Natural killer cell (primary cell): ENCODE measurements at regions of chr1 and their contacts with region 1.

Region 1: GRCh38 chr1:101309334-101310311 is 72.8 kb downstream of the S1PR1 start:
- DNase-seq: peak; percentile 72 to 94
- ATAC-seq: peak; percentile 66 to 89 (median 85)
- H3K4me3 ChIP-seq: peak overlapping the region; percentile 28
- H3K4me3 Mint-ChIP-seq: peak overlapping the region; percentile 84
- H3K27ac ChIP-seq: peak overlapping the region; percentile 86
- H3K27ac Mint-ChIP-seq: peak overlapping the region; percentile 91
- H3K4me1 ChIP-seq: peaks cover 76% of the 10 kb centered on the region
- H3K4me1 Mint-ChIP-seq: peaks cover 86 to 88% of the 10 kb centered on the region in 2 donors
- H3K27me3 ChIP-seq: no peaks in the 10 kb centered on the region
- H3K27me3 Mint-ChIP-seq: no peaks in the 10 kb centered on the region
- CTCF ChIP-seq: peak; percentile 83

Region 2: GRCh38 chr1:100396651-100397050 is 913.0 kb before region 1 on chr1:
- intact Hi-C with region 1: loop called (anchors 10 kb)
- DNase-seq: peak in 1 of 2 donors; percentile 75
- ATAC-seq: peak; percentile 67 to 79 (median 77)
- H3K4me3 ChIP-seq: no peak overlapping the region
- H3K4me3 Mint-ChIP-seq: peak overlapping the region; percentile 72
- H3K27ac ChIP-seq: peak overlapping the region; percentile 89
- H3K27ac Mint-ChIP-seq: peak overlapping the region; percentile 80 to 95
- H3K4me1 ChIP-seq: peaks cover 49% of the 10 kb centered on the region
- H3K4me1 Mint-ChIP-seq: peaks cover 77% of the 10 kb centered on the region in 2 donors
- H3K27me3 ChIP-seq: no peaks in the 10 kb centered on the region
- H3K27me3 Mint-ChIP-seq: no peaks in the 10 kb centered on the region
- CTCF ChIP-seq: no peak

Region 3: DNA sequence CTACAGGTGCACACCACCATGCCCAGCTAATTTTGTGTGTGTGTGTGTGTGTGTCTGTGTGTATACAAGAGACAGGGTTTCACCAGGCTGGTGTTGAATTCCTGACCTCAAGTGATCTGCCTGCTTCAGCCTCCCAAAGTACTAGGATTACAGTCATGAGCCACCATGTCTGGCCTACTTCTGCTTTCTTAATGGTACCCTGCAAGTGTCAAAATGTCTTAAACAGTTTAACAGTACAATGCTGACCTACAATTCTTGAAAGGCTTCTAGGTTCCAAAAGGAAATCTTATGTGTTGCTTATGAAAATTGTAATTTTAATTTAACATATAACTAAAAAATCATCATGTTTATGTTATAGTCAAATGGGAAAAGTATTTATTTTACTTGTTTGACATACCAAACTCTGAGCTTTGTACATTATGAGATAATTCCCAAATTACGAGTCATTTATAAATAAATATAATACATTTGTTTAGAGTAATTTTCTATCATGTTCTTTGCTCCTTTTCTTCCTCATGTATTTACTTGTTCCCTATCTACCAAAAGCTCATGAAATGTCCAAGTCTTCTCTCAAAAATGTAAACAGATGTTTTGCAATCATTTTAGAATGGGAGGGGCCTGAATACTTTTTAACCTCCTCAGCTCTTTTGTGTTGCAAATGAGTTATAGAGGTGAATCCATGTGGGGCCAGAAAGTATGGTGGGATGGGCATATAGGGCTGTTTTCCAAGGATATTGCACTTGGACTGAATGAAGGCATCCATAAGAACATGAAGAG is 598.5 kb before region 1 on chr1:
- intact Hi-C with region 1: loop called (anchors 2 kb)
- DNase-seq: no peak
- ATAC-seq: no peak
- H3K4me3 ChIP-seq: no peak overlapping the region
- H3K4me3 Mint-ChIP-seq: no peak overlapping the region
- H3K27ac ChIP-seq: no peak overlapping the region
- H3K27ac Mint-ChIP-seq: peak overlapping the region in 1 of 2 donors; percentile 96
- H3K4me1 ChIP-seq: peaks cover 22% of the 10 kb centered on the region
- H3K4me1 Mint-ChIP-seq: peaks cover 46 to 49% of the 10 kb centered on the region in 2 donors
- H3K27me3 ChIP-seq: peaks cover 2% of the 10 kb centered on the region
- H3K27me3 Mint-ChIP-seq: peaks cover 3 to 35% of the 10 kb centered on the region in 2 donors
- CTCF ChIP-seq: no peak

Region 4: DNA sequence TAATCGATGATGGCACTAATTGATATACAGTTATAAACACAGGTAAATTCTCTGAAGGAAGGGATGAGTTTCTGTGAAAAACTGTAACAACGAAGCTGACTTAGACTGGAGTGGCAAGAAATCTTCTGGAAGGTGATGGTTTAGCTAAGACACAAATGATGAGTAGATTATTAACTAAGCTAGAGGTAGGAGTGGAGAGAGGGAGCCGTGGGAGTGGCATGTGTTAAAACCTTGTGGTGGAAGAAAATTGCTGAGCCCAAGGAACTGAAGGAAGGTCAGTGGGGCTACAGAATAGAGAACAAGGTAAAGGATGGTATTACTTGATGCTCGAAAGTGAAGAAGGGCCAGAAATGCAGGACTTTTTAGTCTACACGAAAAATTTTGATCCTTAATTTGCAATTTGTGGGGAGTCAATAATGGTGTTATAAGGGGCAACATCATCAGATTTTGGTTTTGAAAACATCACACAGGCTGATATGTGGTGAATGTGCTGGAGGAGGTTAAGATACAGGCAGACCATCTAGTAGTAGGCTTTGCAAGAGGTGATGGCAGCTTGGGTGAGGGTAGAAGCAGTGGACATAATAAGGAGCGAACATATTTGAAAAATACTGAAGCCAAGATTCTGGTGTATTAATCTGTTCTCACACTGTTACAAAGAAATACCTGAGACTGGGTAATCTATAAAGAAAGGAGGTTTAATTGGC is 21.0 kb after region 1 on chr1:
- intact Hi-C with region 1: loop called (anchors 1 kb)
- DNase-seq: no peak
- ATAC-seq: peak; percentile 43 to 72 (median 54)
- H3K4me3 ChIP-seq: no peak overlapping the region
- H3K4me3 Mint-ChIP-seq: peak overlapping the region; percentile 83
- H3K27ac ChIP-seq: peak overlapping the region; percentile 59
- H3K27ac Mint-ChIP-seq: peak overlapping the region; percentile 88 to 92
- H3K4me1 ChIP-seq: peaks cover 23% of the 10 kb centered on the region
- H3K4me1 Mint-ChIP-seq: peaks cover 76% of the 10 kb centered on the region in 2 donors
- H3K27me3 ChIP-seq: no peaks in the 10 kb centered on the region
- H3K27me3 Mint-ChIP-seq: no peaks in the 10 kb centered on the region
- CTCF ChIP-seq: no peak

Region 5: DNA sequence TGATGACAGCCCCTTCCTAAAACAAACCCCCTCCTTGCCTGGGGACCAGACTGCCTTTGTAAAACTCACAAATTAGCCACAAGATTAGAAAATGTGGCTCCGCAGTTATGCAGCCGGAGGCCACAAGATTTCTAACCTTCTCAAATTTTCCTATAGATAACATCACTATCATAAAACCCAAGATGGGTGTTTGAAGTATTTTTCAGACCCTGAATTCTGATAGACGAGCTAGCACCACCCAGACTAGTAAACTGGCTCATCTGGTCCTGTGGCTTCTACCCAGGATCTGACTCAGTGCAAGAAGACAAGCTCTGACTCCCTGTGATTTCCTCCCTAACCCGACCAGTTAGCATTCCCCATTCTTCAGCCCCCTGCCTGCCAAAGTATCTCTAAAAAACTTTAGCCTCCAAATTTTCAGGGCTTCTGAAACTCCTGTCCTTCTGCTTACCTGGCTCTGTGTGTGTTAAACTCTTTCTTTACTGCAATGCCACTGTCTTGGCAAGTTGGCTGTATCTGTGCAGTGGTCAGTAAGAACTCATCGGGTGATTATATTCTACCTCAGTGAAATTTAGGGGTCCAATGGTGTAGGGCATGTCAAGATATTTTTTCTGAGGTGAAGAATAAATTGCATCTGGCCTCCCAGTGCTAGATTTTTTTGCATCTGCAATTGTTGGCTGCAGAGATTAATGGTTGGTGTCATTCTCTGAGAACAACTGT is 29.2 kb after region 1 on chr1:
- intact Hi-C with region 1: loop called (anchors 2 kb)
- DNase-seq: peak; percentile 33 to 49
- ATAC-seq: peak; percentile 72 to 85 (median 84)
- H3K4me3 ChIP-seq: no peak overlapping the region
- H3K4me3 Mint-ChIP-seq: peak overlapping the region; percentile 78
- H3K27ac ChIP-seq: peak overlapping the region; percentile 47
- H3K27ac Mint-ChIP-seq: peak overlapping the region; percentile 91 to 92
- H3K4me1 ChIP-seq: peaks cover 20% of the 10 kb centered on the region
- H3K4me1 Mint-ChIP-seq: peaks cover 77 to 86% of the 10 kb centered on the region in 2 donors
- H3K27me3 ChIP-seq: no peaks in the 10 kb centered on the region
- H3K27me3 Mint-ChIP-seq: no peaks in the 10 kb centered on the region
- CTCF ChIP-seq: no peak

Region 6: DNA sequence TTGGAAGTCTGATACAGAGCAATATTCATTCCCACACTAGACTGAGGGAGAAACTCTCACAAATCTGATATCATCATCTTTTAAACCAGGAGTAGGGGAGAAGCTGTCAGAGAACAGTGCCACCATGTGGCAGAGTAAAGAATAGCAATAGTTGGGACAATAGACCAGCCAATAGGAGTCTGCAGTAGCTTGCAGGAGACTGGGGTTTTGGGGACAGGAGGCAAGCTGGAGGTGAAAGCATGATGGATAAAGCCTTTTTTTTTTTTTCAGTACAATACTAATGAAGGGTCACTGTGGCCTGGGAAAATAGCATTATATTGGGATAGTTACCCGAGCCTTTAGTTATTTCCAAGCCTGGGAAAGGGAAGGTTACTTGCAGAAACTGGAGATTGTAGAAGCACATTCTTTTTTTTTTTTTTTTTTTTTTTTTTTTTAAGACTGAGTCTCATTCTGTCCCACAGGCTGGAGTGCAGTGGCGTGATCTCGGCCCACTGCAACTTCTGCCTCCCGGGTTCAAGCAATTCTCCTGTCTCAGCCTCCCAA is 47.9 kb after region 1 on chr1:
- intact Hi-C with region 1: loop called (anchors 1 kb)
- DNase-seq: peak; percentile 54 to 94
- ATAC-seq: peak; percentile 96 to 100 (median 99)
- H3K4me3 ChIP-seq: no peak overlapping the region
- H3K4me3 Mint-ChIP-seq: peak overlapping the region; percentile 25
- H3K27ac ChIP-seq: no peak overlapping the region
- H3K27ac Mint-ChIP-seq: peak overlapping the region; percentile 83 to 86
- H3K4me1 ChIP-seq: no peaks in the 10 kb centered on the region
- H3K4me1 Mint-ChIP-seq: peaks cover 22 to 29% of the 10 kb centered on the region in 2 donors
- H3K27me3 ChIP-seq: no peaks in the 10 kb centered on the region
- H3K27me3 Mint-ChIP-seq: no peaks in the 10 kb centered on the region
- CTCF ChIP-seq: peak; percentile 82

Region 7: DNA sequence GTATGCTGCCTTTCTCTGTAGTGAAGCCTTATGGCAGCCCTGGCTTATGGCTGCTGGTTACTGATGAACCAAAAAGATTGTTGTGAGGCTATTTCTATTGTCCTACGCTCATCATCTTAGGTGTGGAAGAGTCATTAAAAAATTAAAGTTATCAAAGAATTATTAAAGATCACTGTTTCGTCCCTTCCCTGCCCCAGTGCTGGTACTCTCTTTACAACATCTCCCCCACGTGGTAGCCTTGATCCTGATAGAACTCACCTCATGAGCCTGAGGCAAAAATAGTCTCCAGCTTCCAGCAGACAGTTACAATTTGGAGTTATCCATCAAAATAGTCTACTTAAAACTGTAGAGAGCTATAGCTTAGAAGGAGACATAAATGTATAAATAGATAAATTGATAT is 128.7 kb after region 1 on chr1:
- intact Hi-C with region 1: loop called (anchors 10 kb)
- DNase-seq: peak in 1 of 2 donors; percentile 36
- ATAC-seq: peak in 1 of 3 donors; percentile 58
- H3K4me3 ChIP-seq: no peak overlapping the region
- H3K4me3 Mint-ChIP-seq: no peak overlapping the region
- H3K27ac ChIP-seq: no peak overlapping the region
- H3K27ac Mint-ChIP-seq: no peak overlapping the region
- H3K4me1 ChIP-seq: peaks cover 9% of the 10 kb centered on the region
- H3K4me1 Mint-ChIP-seq: no peaks in the 10 kb centered on the region
- H3K27me3 ChIP-seq: no peaks in the 10 kb centered on the region
- H3K27me3 Mint-ChIP-seq: peaks cover 0 to 3% of the 10 kb centered on the region in 2 donors
- CTCF ChIP-seq: peak; percentile 19